Left lung (tissue), 14 donors: ENCODE measurements at regions of chr4 and their contacts with region 1.

Region 1: GRCh38 chr4:147586637-147587036 is 30.6 kb upstream of the TMEM184C start:
- DNase-seq: no peak
- ATAC-seq: no peak
- H3K4me3 ChIP-seq: no peak overlapping the region
- H3K27ac ChIP-seq: no peak overlapping the region
- H3K4me1 ChIP-seq: peaks cover 0 to 5% of the 10 kb centered on the region in 2 donors
- H3K27me3 ChIP-seq: no peaks in the 10 kb centered on the region
- CTCF ChIP-seq: no peak

Region 2: DNA sequence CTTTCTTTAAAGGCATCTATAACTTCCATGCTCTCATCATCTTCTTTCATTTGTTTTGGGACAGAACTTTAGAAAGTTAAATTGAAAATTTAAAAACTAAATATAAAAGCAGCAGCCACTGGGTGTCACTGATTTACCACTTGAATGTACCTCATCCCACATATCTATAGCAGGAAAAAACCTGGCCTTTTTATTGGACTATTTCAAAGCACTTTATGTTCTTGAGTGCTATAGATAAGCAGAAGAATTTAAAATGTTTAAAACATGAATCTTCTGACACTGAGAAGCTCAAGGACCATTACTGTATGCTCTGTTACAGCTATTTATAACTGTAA is 475.6 kb before region 1 on chr4:
- intact Hi-C with region 1: loop called in 1 of 2 experiments (anchors 10 kb)
- DNase-seq: peak in 1 of 4 donors; percentile 34
- ATAC-seq: peak; percentile 43
- H3K4me3 ChIP-seq: no peak overlapping the region
- H3K27ac ChIP-seq: no peak overlapping the region
- H3K4me1 ChIP-seq: no peaks in the 10 kb centered on the region
- H3K27me3 ChIP-seq: no peaks in the 10 kb centered on the region
- CTCF ChIP-seq: no peak

Region 3: GRCh38 chr4:147899512-147899911 is 312.9 kb after region 1 on chr4:
- intact Hi-C with region 1: no loop called
- DNase-seq: no peak
- ATAC-seq: no peak
- H3K4me3 ChIP-seq: no peak overlapping the region
- H3K27ac ChIP-seq: no peak overlapping the region
- H3K4me1 ChIP-seq: no peaks in the 10 kb centered on the region
- H3K27me3 ChIP-seq: no peaks in the 10 kb centered on the region
- CTCF ChIP-seq: no peak